ENCODE measurements at regions of chr3 and their contacts with region 1.

Region 1: DNA sequence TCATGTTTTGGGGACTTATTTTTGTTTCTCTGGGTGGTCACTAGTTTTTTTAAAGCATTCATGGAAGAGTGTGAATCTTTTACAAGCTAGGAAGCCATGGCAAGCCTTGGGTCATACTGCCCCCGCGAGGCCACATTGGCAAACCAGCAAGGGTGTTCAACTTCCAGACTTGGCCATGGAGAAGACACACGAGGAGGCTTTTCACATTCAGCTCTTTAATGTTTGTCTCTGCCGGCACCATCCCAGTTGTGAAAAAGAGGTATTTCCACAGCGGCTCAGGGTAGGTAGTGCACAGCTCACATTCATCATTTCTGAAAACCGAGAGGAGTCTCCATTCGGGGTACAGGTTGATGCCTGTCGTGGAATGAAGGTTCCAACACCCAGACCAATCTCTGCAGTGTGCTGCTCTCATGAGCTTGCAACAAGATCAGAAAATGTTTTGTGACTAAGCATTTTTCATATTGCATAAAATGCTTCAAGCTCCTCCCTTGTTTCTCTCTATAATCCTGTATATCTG is 7.7 kb downstream of the CCR5 start:
- DNase-seq: peak; percentile 73
- H3K4me3 ChIP-seq: no peak overlapping the region
- H3K27ac ChIP-seq: no peak overlapping the region
- H3K4me1 ChIP-seq: peaks cover 13% of the 10 kb centered on the region
- CTCF ChIP-seq: peak; percentile 96

Region 2: DNA sequence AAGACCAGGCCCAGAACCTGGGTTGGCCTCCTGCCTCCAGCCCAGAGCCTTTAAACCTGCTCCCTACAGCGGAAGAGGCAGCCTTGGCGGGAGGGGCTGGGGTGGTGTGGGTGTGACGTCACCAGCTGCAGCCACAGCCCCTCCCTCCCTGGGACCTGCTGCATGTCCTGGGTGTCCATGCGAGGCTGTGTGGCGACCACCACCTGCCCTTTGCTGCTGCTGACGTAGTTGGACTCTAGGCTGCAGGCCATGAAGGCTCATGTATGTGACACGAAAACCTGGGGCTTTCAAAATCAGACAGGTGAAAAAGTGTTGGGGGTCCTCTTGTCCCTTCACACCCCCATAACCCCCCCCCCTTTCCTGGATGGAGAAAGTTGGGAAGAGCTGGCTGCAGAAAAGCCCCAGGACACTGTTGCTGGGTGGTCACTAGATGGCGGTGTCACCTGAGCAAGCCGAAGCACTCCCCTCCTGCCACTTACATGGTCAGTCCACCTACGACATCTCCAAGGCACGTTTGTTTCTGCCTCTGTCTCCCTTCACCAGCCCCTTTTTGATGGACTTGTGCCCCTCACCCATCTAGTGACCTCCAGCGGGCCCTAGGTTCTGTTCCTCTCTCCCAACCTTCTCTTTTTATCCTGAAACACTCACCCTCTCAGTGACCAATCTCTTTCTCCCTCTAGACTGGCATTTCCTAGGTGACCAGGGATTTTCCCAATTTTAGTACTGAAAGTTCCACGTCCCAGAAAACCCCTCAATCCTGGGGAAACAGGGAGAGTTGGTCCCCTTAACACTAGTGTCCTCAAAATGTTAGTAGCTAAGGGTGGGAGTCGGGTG is 617.4 kb before region 1 on chr3:
- CTCF ChIA-PET with region 1: no interaction called
- POLR2A ChIA-PET with region 1: no interaction called
- intact Hi-C with region 1: loop called (anchors 10 kb)
- DNase-seq: peak; percentile 53
- H3K4me3 ChIP-seq: no peak overlapping the region
- H3K27ac ChIP-seq: no peak overlapping the region
- H3K4me1 ChIP-seq: no peaks in the 10 kb centered on the region
- CTCF ChIP-seq: peak; percentile 85

Region 3: GRCh38 chr3:45938864-45939263 is 439.6 kb before region 1 on chr3:
- CTCF ChIA-PET with region 1: no interaction called
- POLR2A ChIA-PET with region 1: no interaction called
- intact Hi-C with region 1: loop called (anchors 2 kb)
- DNase-seq: peak; percentile 80
- H3K4me3 ChIP-seq: no peak overlapping the region
- H3K27ac ChIP-seq: no peak overlapping the region
- H3K4me1 ChIP-seq: no peaks in the 10 kb centered on the region
- CTCF ChIP-seq: peak; percentile 86

Region 4: GRCh38 chr3:46089237-46090011 is 289.1 kb before region 1 on chr3:
- CTCF ChIA-PET with region 1: no interaction called
- POLR2A ChIA-PET with region 1: interaction called, 6 read pairs
- intact Hi-C with region 1: loop called (anchors 2 kb)
- DNase-seq: no peak
- H3K4me3 ChIP-seq: no peak overlapping the region
- H3K27ac ChIP-seq: no peak overlapping the region
- H3K4me1 ChIP-seq: peaks cover 36% of the 10 kb centered on the region
- CTCF ChIP-seq: no peak

Region 5: DNA sequence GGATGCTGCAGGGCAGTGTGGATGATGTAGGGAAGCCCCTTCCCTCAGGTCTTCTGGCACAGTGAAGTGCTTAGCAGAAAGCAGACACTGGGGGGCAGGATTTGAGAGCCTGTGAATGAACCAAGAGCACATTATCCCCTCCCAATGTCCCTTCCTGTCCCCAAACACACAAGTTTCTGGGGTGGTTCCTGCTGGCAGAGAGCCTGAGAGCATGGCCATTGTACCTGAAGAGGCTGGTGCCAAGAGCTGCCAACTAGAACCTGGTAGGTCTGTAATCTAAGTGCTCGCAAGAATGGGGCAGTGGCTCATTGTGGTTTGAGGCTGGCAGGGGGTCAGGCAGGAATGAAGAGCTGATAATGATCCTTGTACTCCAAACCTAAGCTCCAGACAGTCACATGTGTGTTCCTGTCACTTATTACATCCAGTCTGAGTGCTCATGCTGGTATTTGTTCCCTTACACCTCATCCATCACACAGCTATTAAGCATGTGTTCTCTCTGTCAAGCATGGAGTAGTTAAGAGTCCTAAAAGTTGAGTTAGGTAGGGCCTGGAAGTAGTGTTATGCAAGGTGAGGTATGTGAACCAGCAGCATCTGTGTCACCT is 163.6 kb before region 1 on chr3:
- CTCF ChIA-PET with region 1: no interaction called
- POLR2A ChIA-PET with region 1: no interaction called
- intact Hi-C with region 1: loop called (anchors 10 kb)
- DNase-seq: peak; percentile 16
- H3K4me3 ChIP-seq: no peak overlapping the region
- H3K27ac ChIP-seq: no peak overlapping the region
- H3K4me1 ChIP-seq: no peaks in the 10 kb centered on the region
- CTCF ChIP-seq: peak; percentile 59

Region 6: DNA sequence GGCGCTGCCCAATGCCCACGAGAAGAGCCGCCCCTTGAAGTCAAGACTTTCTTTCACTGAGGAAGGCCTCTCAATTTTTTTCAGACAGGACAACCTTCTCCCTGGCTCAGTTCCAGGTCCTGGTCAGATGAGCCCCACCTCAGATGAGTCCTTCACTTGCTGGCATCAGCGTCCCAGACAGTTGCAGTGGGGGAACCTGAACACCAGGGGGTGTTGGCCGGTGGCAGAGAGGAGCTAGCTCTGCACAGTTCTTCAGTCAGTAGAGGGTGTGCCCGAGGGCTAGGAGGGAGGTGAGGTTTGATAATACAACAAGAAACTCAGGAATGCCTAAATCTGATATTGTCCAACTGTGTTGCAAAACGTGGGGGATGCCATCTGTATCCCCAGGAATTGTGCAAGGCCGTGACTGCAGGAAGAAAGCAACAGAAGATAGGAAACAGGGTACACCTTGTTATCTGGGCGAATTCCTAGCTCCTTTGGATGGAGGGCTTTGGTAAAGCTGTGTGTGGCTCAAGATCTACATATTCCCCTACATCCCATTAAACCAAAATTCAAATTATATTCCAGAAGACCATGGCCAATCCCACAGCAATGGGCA is 101.9 kb before region 1 on chr3:
- CTCF ChIA-PET with region 1: no interaction called
- POLR2A ChIA-PET with region 1: no interaction called
- intact Hi-C with region 1: loop called (anchors 1 kb)
- DNase-seq: peak; percentile 38
- H3K4me3 ChIP-seq: no peak overlapping the region
- H3K27ac ChIP-seq: no peak overlapping the region
- H3K4me1 ChIP-seq: no peaks in the 10 kb centered on the region
- CTCF ChIP-seq: peak; percentile 80

Region 7: GRCh38 chr3:46558184-46559043 is 179.9 kb after region 1 on chr3:
- CTCF ChIA-PET with region 1: no interaction called
- POLR2A ChIA-PET with region 1: no interaction called
- intact Hi-C with region 1: loop called (anchors 5 kb)
- DNase-seq: peak; percentile 88
- H3K4me3 ChIP-seq: no peak overlapping the region
- H3K27ac ChIP-seq: peak overlapping the region; percentile 32
- H3K4me1 ChIP-seq: peaks cover 23% of the 10 kb centered on the region
- CTCF ChIP-seq: peak; percentile 98